A549 (cell line): ENCODE measurements at regions of chr15 and their contacts with region 1.

Region 1: DNA sequence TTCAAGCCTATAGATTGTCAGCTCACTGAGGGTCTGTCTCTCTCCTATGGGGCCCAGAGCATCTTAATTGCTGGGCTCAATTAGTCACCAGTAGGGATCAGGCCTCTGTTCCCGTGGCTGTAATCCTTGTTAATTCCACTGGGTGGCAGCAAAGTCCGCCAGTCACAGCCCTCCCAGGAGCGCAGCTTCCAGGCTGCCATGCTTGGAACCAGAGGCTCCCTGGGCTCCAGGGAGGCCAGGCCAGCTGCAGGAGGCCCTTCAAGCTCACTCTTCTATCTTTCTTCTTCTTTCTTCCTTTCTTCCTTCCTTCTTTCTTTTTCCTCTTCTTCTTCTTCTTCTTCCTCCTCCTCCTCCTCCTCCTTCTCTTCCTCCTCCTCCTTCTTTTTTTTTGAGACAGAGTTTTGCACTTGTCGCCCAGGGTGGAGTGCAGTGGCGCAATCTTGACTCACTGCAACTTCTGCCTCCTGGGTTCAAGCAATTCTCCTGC is 14.4 kb downstream of the RNU5B-1 start:
- DNase-seq: peak; percentile 83 to 97
- ATAC-seq: peak; percentile 96 to 98
- H3K4me3 ChIP-seq: no peak overlapping the region
- H3K27ac ChIP-seq: no peak overlapping the region
- H3K4me1 ChIP-seq: no peaks in the 10 kb centered on the region
- CTCF ChIP-seq: peak; percentile 98
- EP300 ChIP-seq: no peak
- POLR2A ChIP-seq: no peak
- RAD21 ChIP-seq: peak; percentile 99

Region 2: DNA sequence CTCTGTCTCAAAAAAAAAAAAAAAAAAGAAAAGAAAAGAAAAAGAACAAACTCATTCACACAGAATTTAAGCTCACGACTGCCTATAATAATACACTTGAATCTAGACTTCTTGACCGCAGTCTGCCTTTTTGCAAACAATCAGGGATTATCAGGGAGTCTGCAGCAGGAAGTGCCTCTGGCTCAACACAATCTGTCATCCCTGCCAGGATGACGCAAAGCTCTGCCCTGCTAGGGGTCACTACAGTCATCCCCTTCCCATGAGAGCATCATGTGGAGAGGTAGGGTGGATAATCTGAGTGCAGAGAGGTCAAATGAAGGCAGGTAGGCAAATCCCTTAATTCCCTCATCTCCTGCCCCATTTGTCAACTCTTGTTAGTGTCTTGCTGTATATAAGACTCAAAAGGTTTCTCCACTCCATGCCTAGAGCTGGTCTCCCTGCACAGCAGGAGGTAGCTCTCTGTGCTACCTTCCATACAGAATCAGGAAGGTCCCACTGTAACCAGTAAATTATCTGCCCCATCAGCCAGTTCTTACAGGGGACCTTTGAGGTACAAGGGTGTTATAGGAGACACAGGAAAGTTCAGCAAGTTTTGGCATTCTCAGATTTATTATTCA is 208.1 kb before region 1 on chr15:
- CTCF ChIA-PET with region 1: no interaction called
- POLR2A ChIA-PET with region 1: no interaction called
- DNase-seq: no peak
- ATAC-seq: peak in 1 of 2 experiments; percentile 43; a peak in 2 of 6 replicates
- H3K4me3 ChIP-seq: no peak overlapping the region
- H3K27ac ChIP-seq: no peak overlapping the region
- H3K4me1 ChIP-seq: no peaks in the 10 kb centered on the region
- CTCF ChIP-seq: no peak
- EP300 ChIP-seq: no peak
- POLR2A ChIP-seq: no peak
- RAD21 ChIP-seq: no peak

Region 3: GRCh38 chr15:65222891-65223290 is 96.0 kb before region 1 on chr15:
- CTCF ChIA-PET with region 1: no interaction called
- POLR2A ChIA-PET with region 1: no interaction called
- DNase-seq: no peak
- ATAC-seq: peak; percentile 19 to 27; a peak in 3 of 6 replicates
- H3K4me3 ChIP-seq: no peak overlapping the region
- H3K27ac ChIP-seq: no peak overlapping the region; a peak in 2 of 6 replicates
- H3K4me1 ChIP-seq: peaks cover 25% of the 10 kb centered on the region
- CTCF ChIP-seq: no peak
- EP300 ChIP-seq: no peak
- POLR2A ChIP-seq: no peak
- RAD21 ChIP-seq: no peak

Region 4: DNA sequence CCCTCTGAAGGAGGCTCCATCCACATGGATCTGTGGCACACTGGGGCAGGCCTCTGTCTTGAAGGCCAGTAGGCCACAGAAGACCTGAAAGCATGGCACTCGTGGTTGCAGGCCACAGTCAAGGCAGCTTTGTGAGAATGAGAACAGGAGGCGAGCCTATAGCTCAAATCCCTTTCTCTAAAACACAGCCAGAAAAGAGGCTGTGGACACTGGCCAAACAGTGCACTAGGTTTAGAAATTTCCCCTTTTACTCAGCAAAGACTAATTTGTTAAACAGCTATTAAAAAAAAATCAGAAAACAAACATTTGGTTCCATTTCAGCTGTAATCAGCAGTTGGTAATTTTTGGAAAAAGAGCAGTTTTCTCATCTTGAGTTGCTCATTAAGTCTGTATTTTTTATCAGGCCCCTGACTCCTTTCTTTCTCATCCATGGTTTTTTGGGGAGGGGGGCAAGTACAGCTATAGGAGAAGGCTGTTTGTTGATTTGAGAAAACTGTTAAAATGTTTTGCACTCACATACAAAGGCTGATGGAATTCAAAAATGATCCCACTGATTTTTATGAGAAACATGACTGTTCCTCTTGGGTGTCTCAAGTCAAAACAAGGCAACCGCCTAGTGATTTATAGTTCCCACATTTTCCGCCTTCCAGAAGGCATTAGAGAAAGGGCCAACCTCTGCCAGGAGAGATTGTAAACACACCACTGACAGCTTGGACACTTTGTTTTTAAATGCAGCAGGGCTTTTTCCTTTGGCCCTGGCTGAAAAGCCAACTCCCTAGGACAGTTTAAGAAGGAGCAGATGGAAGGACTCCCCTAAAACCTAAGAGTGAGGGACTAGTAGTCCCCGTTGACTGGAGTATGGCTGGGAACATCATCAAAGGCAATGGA is 60.3 kb before region 1 on chr15:
- CTCF ChIA-PET with region 1: no interaction called
- POLR2A ChIA-PET with region 1: no interaction called
- DNase-seq: no peak
- ATAC-seq: no peak
- H3K4me3 ChIP-seq: no peak overlapping the region
- H3K27ac ChIP-seq: no peak overlapping the region
- H3K4me1 ChIP-seq: no peaks in the 10 kb centered on the region
- CTCF ChIP-seq: no peak
- EP300 ChIP-seq: no peak
- POLR2A ChIP-seq: no peak
- RAD21 ChIP-seq: no peak

Region 5: DNA sequence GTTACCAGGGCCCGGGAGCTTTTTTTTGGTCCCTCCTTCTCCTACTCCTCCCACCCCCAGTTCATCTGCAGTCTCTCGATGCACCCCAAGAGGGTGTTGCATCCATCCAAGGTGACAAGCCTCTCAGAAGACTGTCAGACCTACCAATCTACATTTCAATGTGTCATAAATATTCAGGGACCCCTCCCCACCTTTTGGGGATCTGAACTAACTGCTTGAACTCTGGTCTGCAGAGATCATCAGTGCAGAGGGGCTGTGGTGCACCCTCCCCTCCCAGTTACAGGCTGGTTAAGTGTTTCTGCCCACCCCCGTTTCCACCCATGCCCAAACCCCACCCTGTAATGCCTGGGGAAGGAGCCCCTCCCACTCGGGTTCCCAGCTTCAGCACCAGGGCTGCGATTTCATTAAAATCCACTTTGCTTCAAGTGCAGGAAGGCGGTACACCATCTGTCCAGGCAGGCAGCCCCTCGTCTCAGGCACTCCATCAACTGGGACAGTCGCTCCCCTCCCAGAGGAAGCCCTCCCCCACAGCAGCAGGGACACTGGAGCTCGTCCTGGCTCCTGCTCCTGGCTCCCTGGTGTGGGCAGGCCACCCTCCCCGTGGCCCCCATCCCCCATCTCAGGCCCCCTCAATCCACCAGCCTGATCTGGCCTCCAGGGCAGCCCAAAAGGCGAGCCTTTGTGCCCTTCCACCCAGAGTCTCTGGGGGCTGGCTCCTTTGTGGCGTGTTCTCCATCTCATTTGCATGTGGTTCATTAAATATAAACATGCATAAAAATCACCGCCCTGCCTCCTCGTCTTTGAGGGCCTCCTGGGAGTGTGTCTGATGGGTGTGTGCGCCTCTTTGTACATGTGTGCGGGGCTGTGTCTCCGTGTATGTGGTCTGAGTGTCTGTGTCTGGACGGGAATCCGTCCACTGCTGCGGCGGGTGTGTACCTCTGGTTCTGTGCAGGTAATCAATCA is 17.9 kb after region 1 on chr15:
- CTCF ChIA-PET with region 1: interaction called, 118 read pairs
- POLR2A ChIA-PET with region 1: no interaction called
- DNase-seq: no peak
- ATAC-seq: peak in 1 of 2 experiments; percentile 5; a peak in 1 of 6 replicates
- H3K4me3 ChIP-seq: no peak overlapping the region
- H3K27ac ChIP-seq: no peak overlapping the region
- H3K4me1 ChIP-seq: no peaks in the 10 kb centered on the region
- CTCF ChIP-seq: no peak
- EP300 ChIP-seq: no peak
- POLR2A ChIP-seq: no peak
- RAD21 ChIP-seq: no peak

Region 6: GRCh38 chr15:65361708-65362459 is 43.0 kb after region 1 on chr15:
- CTCF ChIA-PET with region 1: interaction called, 26 read pairs
- POLR2A ChIA-PET with region 1: no interaction called
- DNase-seq: no peak
- ATAC-seq: no peak
- H3K4me3 ChIP-seq: no peak overlapping the region
- H3K27ac ChIP-seq: no peak overlapping the region
- H3K4me1 ChIP-seq: no peaks in the 10 kb centered on the region
- CTCF ChIP-seq: no peak
- EP300 ChIP-seq: no peak
- POLR2A ChIP-seq: no peak
- RAD21 ChIP-seq: no peak

Region 7: DNA sequence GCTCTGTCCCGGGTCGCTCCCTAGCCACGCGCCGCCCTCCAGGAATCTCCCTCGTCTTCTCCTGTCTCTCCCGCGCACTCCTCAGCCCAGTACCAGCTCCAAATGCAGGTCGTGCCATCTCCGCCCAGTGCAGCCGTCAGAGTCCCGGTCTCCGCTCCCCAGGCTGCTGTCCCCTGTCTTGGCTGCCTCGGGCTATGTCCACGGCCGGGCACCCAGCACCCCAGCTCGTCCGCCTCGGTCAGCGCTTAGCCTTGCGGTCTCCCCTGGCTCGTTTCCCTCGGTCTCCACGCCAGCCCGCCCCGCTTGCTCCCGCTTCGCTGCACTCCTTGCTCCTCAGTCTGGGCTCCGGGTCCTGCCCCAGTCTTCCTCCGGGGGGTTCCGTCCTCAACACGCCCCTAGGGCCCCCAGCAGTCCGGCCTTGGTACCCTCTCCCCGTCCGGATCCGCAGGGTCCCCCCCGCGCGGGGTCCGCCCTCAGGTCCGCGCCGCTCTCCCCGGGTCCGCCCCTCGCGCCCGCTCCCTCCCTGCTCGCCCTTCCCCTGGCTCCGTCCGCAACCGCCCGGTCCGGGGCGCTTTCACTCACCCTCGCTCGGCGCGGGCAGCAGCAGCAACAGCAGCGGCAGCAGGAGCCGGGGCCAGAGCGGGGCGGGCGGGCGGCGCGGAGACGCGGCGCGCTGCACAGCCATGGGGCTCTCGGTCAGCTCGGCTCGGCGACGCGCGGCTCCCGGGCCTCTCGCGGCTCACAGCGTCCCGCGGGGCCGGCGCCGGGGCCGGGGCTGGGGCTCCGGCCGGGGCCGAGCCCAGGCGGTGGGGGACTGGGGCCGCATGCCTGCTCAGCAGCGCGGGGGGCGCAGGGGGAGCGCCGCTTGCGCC is 58.4 kb after region 1 on chr15:
- CTCF ChIA-PET with region 1: interaction called, 722 read pairs
- POLR2A ChIA-PET with region 1: no interaction called
- DNase-seq: peak; percentile 47 to 61
- ATAC-seq: peak; percentile 61 to 79
- H3K4me3 ChIP-seq: peak overlapping the region; percentile 62
- H3K27ac ChIP-seq: peak overlapping the region; percentile 7 to 83; a peak in 5 of 6 replicates
- H3K4me1 ChIP-seq: peaks cover 10% of the 10 kb centered on the region; the same call in 2 of the 3 replicates
- CTCF ChIP-seq: no peak
- EP300 ChIP-seq: no peak
- POLR2A ChIP-seq: no peak
- RAD21 ChIP-seq: no peak

Region 8: DNA sequence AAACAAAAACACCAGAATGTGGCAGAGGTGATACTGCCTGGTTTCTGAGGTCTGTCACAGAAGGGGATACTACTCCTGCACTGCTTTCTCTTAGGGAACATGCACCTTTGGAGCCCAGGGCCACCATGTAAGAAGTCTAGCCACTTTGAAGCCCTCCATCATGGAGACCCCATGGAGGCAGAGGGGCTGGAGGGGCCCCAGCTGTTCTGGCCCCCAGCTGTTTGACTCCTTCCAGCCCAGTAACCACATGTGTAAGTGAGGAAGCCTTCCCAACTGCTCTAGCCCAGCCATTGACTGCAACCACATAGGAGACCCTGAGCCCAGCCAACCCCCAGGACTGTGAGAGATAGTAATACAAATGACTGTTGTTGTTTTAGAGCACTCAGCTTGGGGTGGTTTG is 112.8 kb after region 1 on chr15:
- CTCF ChIA-PET with region 1: interaction called, 15 read pairs
- POLR2A ChIA-PET with region 1: no interaction called
- DNase-seq: no peak
- ATAC-seq: no peak
- H3K4me3 ChIP-seq: no peak overlapping the region
- H3K27ac ChIP-seq: no peak overlapping the region
- H3K4me1 ChIP-seq: peaks cover 8% of the 10 kb centered on the region
- CTCF ChIP-seq: no peak
- EP300 ChIP-seq: no peak
- POLR2A ChIP-seq: no peak
- RAD21 ChIP-seq: no peak